ENCODE measurements at regions of chr19 and their contacts with region 1.

Region 1: GRCh38 chr19:16185123-16185767 is at the start of gene FAM32A:
- DNase-seq: peak; percentile 99
- ATAC-seq: peak; percentile 88
- H3K4me3 ChIP-seq: peak within 1 kb of the TSS; percentile 65 to 99 (median 71)
- H3K4me3 Mint-ChIP-seq: peak within 1 kb of the TSS; percentile 97
- H3K27ac ChIP-seq: peak within 1 kb of the TSS; percentile 60 to 83
- H3K27ac Mint-ChIP-seq: peak within 1 kb of the TSS; percentile 96
- H3K4me1 ChIP-seq: peaks cover 14 to 37% of the 10 kb centered on the region in 2 donors
- H3K4me1 Mint-ChIP-seq: peaks cover 33% of the 10 kb centered on the region
- H3K27me3 ChIP-seq: no peaks in the 10 kb centered on the region
- H3K27me3 Mint-ChIP-seq: no peaks in the 10 kb centered on the region
- CTCF ChIP-seq: no peak
- total RNA-seq, gene FAM32A: 53.4 TPM in 2 replicates

Region 2: GRCh38 chr19:16041299-16041990 is 143.8 kb before region 1 on chr19:
- CTCF ChIA-PET with region 1: interaction called, 47 read pairs
- POLR2A ChIA-PET with region 1: interaction called, 3 read pairs
- intact Hi-C with region 1: loop called (anchors 1 kb)
- DNase-seq: peak; percentile 80
- ATAC-seq: peak; percentile 86
- H3K4me3 ChIP-seq: no peak overlapping the region
- H3K4me3 Mint-ChIP-seq: no peak overlapping the region
- H3K27ac ChIP-seq: no peak overlapping the region
- H3K27ac Mint-ChIP-seq: no peak overlapping the region
- H3K4me1 ChIP-seq: peaks cover 7 to 8% of the 10 kb centered on the region in 2 donors
- H3K4me1 Mint-ChIP-seq: peaks cover 10% of the 10 kb centered on the region
- H3K27me3 ChIP-seq: peaks cover 0 to 4% (median 0%) of the 10 kb centered on the region in 4 experiments
- H3K27me3 Mint-ChIP-seq: no peaks in the 10 kb centered on the region
- CTCF ChIP-seq: peak; percentile 95

Region 3: DNA sequence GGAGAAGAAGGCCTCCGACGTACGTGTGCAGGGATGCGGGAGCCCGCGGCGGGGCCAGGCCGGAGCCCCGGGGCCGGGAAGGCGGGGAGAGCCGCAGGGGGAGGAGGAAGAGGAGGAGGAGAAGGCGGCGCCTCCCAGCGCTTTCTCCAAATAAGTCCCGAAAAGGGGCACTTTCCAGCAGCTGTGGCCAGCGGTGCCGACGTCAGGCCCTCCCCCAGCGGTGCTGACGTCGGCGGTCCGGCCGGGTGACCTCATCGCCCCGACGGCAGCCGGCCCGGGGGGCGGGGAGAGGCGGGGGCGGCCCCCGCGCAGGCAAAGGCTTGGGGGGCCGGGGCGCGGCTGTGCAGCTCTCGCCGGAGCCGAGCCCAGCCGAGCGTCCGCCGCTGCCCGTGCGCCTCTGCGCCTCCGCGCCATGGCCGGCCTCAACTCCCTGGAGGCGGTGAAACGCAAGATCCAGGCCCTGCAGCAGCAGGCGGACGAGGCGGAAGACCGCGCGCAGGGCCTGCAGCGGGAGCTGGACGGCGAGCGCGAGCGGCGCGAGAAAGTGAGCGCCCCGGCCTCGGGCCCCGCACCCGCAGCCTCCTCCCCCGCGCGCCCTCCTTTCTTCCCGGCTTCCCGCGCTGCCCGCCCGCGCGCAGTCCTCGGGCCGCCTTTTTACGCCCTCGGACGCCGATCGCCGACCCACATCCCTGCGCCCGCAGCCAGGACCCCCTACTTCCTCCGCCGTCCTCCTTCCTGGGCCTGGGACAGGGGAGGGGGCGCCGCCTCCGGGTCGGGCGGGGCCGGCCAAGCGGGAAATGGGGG is 108.9 kb before region 1 on chr19 and contains the start of gene TPM4:
- CTCF ChIA-PET with region 1: interaction called, 7 read pairs
- POLR2A ChIA-PET with region 1: interaction called, 14 read pairs
- intact Hi-C with region 1: loop called (anchors 1 kb)
- DNase-seq: peak; percentile 93
- ATAC-seq: peak; percentile 60
- H3K4me3 ChIP-seq: peak within 1 kb of the TSS; percentile 56 to 86 (median 73)
- H3K4me3 Mint-ChIP-seq: peak within 1 kb of the TSS; percentile 88
- H3K27ac ChIP-seq: peak within 1 kb of the TSS; percentile 91 to 92
- H3K27ac Mint-ChIP-seq: peak within 1 kb of the TSS; percentile 94
- H3K4me1 ChIP-seq: peaks cover 35 to 56% of the 10 kb centered on the region in 2 donors
- H3K4me1 Mint-ChIP-seq: peaks cover 60% of the 10 kb centered on the region
- H3K27me3 ChIP-seq: no peaks in the 10 kb centered on the region
- H3K27me3 Mint-ChIP-seq: no peaks in the 10 kb centered on the region
- CTCF ChIP-seq: no peak
- total RNA-seq, gene TPM4: 127 TPM in 2 replicates

Region 4: DNA sequence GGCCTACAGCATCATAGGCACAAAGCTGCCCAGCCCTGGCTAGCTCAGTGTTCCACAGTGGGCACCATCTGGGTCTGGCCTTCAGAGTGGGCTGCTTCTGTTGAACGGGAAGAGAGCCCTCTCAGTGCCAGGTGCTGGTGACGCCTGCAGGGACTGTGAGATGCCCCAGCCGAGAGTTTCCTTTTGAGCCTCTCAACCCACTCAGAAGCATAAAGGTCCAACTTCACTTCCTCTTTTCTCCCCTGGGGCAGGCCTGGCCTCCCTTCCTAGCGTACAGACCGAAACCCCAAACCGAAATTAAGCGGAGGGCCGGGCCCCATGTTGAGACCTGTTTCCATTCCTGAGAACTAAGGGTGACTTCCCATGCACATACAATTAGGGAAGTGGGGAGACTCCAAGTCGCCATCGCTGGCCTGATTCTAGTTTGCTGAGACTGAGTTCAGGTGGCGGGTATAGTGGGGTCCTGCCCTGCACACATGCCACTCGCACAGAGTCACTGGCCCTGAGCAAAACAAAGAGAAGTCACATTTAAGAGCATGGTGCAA is 66.7 kb before region 1 on chr19:
- CTCF ChIA-PET with region 1: interaction called, 18 read pairs
- POLR2A ChIA-PET with region 1: interaction called, 6 read pairs
- intact Hi-C with region 1: loop called (anchors 1 kb)
- DNase-seq: peak; percentile 93
- ATAC-seq: peak; percentile 91
- H3K4me3 ChIP-seq: peak overlapping the region in 3 of 5 experiments; percentile 11 to 48 (median 23)
- H3K4me3 Mint-ChIP-seq: peak overlapping the region; percentile 70
- H3K27ac ChIP-seq: peak overlapping the region; percentile 86 to 88
- H3K27ac Mint-ChIP-seq: peak overlapping the region; percentile 97
- H3K4me1 ChIP-seq: peaks cover 64 to 75% of the 10 kb centered on the region in 2 donors
- H3K4me1 Mint-ChIP-seq: peaks cover 66% of the 10 kb centered on the region
- H3K27me3 ChIP-seq: no peaks in the 10 kb centered on the region
- H3K27me3 Mint-ChIP-seq: no peaks in the 10 kb centered on the region
- CTCF ChIP-seq: no peak

Measured in B cell (primary cell).